Caco-2 (cell line): ENCODE measurements at regions of chr11 and their contacts with region 1.

Region 1: GRCh38 chr11:727859-728748 is 19.2 kb upstream of the TALDO1 start:
- DNase-seq: peak in 1 of 2 experiments; percentile 80
- H3K4me3 ChIP-seq: no peak overlapping the region
- H3K4me3 Mint-ChIP-seq: no peak overlapping the region
- H3K27ac Mint-ChIP-seq: no peak overlapping the region
- H3K4me1 ChIP-seq: peaks cover 15% of the 10 kb centered on the region
- H3K4me1 Mint-ChIP-seq: peaks cover 4% of the 10 kb centered on the region
- H3K27me3 ChIP-seq: no peaks in the 10 kb centered on the region
- H3K27me3 Mint-ChIP-seq: no peaks in the 10 kb centered on the region
- CTCF ChIP-seq: peak; percentile 67 to 92

Region 2: GRCh38 chr11:554824-555472 is 173.2 kb before region 1 on chr11:
- CTCF ChIA-PET with region 1: interaction called, 4 read pairs
- POLR2A ChIA-PET with region 1: no interaction called
- intact Hi-C with region 1: loop called (anchors 10 kb)
- DNase-seq: peak; percentile 82 to 86
- H3K4me3 ChIP-seq: peak overlapping the region; percentile 62
- H3K4me3 Mint-ChIP-seq: peak overlapping the region; percentile 56
- H3K27ac Mint-ChIP-seq: no peak overlapping the region
- H3K4me1 ChIP-seq: peaks cover 23% of the 10 kb centered on the region
- H3K4me1 Mint-ChIP-seq: peaks cover 11% of the 10 kb centered on the region
- H3K27me3 ChIP-seq: no peaks in the 10 kb centered on the region
- H3K27me3 Mint-ChIP-seq: no peaks in the 10 kb centered on the region
- CTCF ChIP-seq: peak; percentile 73 to 85

Region 3: GRCh38 chr11:662689-663274 is 65.3 kb before region 1 on chr11:
- CTCF ChIA-PET with region 1: no interaction called
- POLR2A ChIA-PET with region 1: no interaction called
- intact Hi-C with region 1: loop called (anchors 1 kb)
- DNase-seq: peak in 1 of 2 experiments; percentile 65
- H3K4me3 ChIP-seq: no peak overlapping the region
- H3K4me3 Mint-ChIP-seq: no peak overlapping the region
- H3K27ac Mint-ChIP-seq: no peak overlapping the region
- H3K4me1 ChIP-seq: no peaks in the 10 kb centered on the region
- H3K4me1 Mint-ChIP-seq: no peaks in the 10 kb centered on the region
- H3K27me3 ChIP-seq: no peaks in the 10 kb centered on the region
- H3K27me3 Mint-ChIP-seq: no peaks in the 10 kb centered on the region
- CTCF ChIP-seq: peak; percentile 72 to 78

Region 4: DNA sequence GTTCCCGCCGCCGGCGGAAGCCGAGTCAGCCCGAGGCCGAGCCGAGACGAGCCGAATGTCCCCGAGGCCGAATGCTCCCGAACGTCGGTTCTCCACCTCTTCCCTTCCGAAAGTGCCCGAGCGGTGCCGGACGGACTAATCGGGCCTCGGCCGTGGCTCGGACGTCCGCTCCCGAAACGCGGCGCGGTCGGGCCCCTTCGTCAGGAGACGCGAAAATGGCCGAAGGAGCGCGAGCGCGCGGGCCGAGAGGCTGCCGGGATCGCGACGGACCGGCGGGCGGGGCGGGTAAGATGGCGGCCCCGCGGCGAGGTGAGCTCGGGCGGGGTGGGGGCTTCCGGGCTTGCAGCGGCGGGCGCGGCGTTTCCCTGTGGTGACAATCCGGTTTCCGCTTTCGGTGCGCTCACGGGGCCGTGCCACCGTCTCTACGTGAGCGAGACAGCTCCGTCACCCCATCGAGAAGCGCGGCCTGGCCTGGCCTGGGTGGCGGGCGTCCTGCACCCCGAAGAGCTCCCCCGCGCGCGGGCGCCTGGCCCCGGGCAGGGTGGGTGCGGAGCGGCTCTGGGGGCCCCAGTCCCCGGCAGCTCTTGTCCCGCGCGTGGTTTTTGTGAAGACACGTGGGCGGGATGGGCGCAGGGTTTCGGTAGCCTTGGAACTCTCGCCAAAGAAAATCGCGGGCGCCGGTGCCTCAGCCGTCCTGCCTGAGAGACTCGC is 32.4 kb before region 1 on chr11 and contains the start of gene TMEM80:
- CTCF ChIA-PET with region 1: interaction called, 4 read pairs
- POLR2A ChIA-PET with region 1: no interaction called
- intact Hi-C with region 1: loop called (anchors 1 kb)
- DNase-seq: peak; percentile 98 to 99
- H3K4me3 ChIP-seq: peak within 1 kb of the TSS; percentile 97
- H3K4me3 Mint-ChIP-seq: peak within 1 kb of the TSS; percentile 86
- H3K27ac Mint-ChIP-seq: peak within 1 kb of the TSS; percentile 97
- H3K4me1 ChIP-seq: peaks cover 10% of the 10 kb centered on the region
- H3K4me1 Mint-ChIP-seq: peaks cover 15% of the 10 kb centered on the region
- H3K27me3 ChIP-seq: no peaks in the 10 kb centered on the region
- H3K27me3 Mint-ChIP-seq: no peaks in the 10 kb centered on the region
- CTCF ChIP-seq: no peak
- total RNA-seq, gene TMEM80: 70.3 and 74.7 TPM in 2 replicates

Region 5: GRCh38 chr11:706957-707816 is 20.9 kb before region 1 on chr11:
- CTCF ChIA-PET with region 1: interaction called, 8 read pairs
- POLR2A ChIA-PET with region 1: no interaction called
- intact Hi-C with region 1: loop called (anchors 1 kb)
- DNase-seq: peak; percentile 82 to 87
- H3K4me3 ChIP-seq: peak overlapping the region; percentile 80
- H3K4me3 Mint-ChIP-seq: peak overlapping the region; percentile 86
- H3K27ac Mint-ChIP-seq: peak overlapping the region; percentile 90
- H3K4me1 ChIP-seq: peaks cover 56% of the 10 kb centered on the region
- H3K4me1 Mint-ChIP-seq: peaks cover 13% of the 10 kb centered on the region
- H3K27me3 ChIP-seq: no peaks in the 10 kb centered on the region
- H3K27me3 Mint-ChIP-seq: no peaks in the 10 kb centered on the region
- CTCF ChIP-seq: peak in 1 of 2 experiments; percentile 63

Region 6: DNA sequence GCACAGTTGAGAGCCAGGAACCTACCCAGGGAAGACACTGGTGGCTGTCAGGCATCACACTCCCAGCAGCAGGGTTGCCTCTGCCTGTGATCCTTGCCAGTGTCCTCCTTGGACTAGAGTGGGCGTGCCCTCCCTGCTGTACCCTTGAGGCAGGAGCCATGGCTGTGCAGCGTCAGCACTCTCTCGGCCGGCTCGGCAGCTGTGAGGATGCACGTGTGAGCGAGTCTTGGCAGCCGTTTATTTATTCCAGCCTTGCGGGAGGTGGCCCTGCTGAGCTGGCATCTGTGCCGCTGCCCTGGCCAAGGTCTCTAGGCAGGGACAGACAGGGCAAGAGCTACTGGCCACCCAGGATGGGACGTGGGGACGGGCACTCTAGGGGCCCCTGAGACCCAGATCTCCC is 148.4 kb after region 1 on chr11:
- CTCF ChIA-PET with region 1: no interaction called
- POLR2A ChIA-PET with region 1: no interaction called
- intact Hi-C with region 1: no loop called
- DNase-seq: no peak
- H3K4me3 ChIP-seq: no peak overlapping the region
- H3K4me3 Mint-ChIP-seq: no peak overlapping the region
- H3K27ac Mint-ChIP-seq: no peak overlapping the region
- H3K4me1 ChIP-seq: no peaks in the 10 kb centered on the region
- H3K4me1 Mint-ChIP-seq: no peaks in the 10 kb centered on the region
- H3K27me3 ChIP-seq: no peaks in the 10 kb centered on the region
- H3K27me3 Mint-ChIP-seq: no peaks in the 10 kb centered on the region
- CTCF ChIP-seq: no peak

Region 7: GRCh38 chr11:1036303-1036923 is 308.3 kb after region 1 on chr11 and contains the start of gene MUC6:
- CTCF ChIA-PET with region 1: no interaction called
- POLR2A ChIA-PET with region 1: no interaction called
- intact Hi-C with region 1: no loop called
- DNase-seq: no peak
- H3K4me3 ChIP-seq: no peak within 1 kb of the TSS
- H3K4me3 Mint-ChIP-seq: no peak within 1 kb of the TSS
- H3K27ac Mint-ChIP-seq: no peak within 1 kb of the TSS
- H3K4me1 ChIP-seq: no peaks in the 10 kb centered on the region
- H3K4me1 Mint-ChIP-seq: no peaks in the 10 kb centered on the region
- H3K27me3 ChIP-seq: no peaks in the 10 kb centered on the region
- H3K27me3 Mint-ChIP-seq: no peaks in the 10 kb centered on the region
- CTCF ChIP-seq: no peak
- total RNA-seq, gene MUC6: not detected in 2 replicates